Psoas muscle (tissue), 8 donors: ENCODE measurements at regions of chr6 and their contacts with region 1.

Region 1: DNA sequence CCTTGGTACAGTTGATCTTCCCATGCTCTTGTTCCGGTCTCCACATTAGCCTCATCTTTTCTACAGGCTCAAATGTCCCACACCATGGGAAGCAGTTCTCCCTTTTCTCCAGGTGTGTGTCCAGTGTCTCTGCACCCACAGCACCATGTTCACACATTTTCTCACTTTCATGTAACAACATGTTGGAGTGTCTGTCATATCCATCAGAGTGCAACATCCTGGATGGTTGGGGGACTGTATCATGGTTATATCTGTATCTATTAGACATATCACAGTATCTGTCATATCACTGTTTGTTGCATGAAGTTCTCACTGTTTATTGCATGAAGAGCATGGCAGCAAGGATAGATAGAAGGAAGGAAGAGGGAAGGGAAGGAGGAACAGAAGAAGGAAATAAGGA is 635.6 kb downstream of the EPM2A start:
- DNase-seq: no peak
- ATAC-seq: no peak
- H3K4me3 ChIP-seq: no peak overlapping the region
- H3K27ac ChIP-seq: no peak overlapping the region
- H3K4me1 ChIP-seq: no peaks in the 10 kb centered on the region
- H3K27me3 ChIP-seq: no peaks in the 10 kb centered on the region
- CTCF ChIP-seq: no peak

Region 2: GRCh38 chr6:144493035-144493910 is 606.4 kb before region 1 on chr6:
- intact Hi-C with region 1: no loop called
- DNase-seq: no peak
- ATAC-seq: peak in 1 of 4 donors; percentile 90
- H3K4me3 ChIP-seq: no peak overlapping the region
- H3K27ac ChIP-seq: no peak overlapping the region
- H3K4me1 ChIP-seq: no peaks in the 10 kb centered on the region
- H3K27me3 ChIP-seq: no peaks in the 10 kb centered on the region
- CTCF ChIP-seq: no peak

Region 3: GRCh38 chr6:144999127-144999526 is 100.6 kb before region 1 on chr6:
- intact Hi-C with region 1: no loop called
- DNase-seq: no peak
- ATAC-seq: no peak
- H3K4me3 ChIP-seq: no peak overlapping the region
- H3K27ac ChIP-seq: no peak overlapping the region
- H3K4me1 ChIP-seq: no peaks in the 10 kb centered on the region
- H3K27me3 ChIP-seq: no peaks in the 10 kb centered on the region
- CTCF ChIP-seq: no peak

Region 4: GRCh38 chr6:145036848-145037567 is 62.7 kb before region 1 on chr6:
- intact Hi-C with region 1: no loop called
- DNase-seq: no peak
- ATAC-seq: peak in 3 of 4 donors; percentile 51 to 75 (median 70)
- H3K4me3 ChIP-seq: no peak overlapping the region
- H3K27ac ChIP-seq: no peak overlapping the region
- H3K4me1 ChIP-seq: no peaks in the 10 kb centered on the region
- H3K27me3 ChIP-seq: no peaks in the 10 kb centered on the region
- CTCF ChIP-seq: no peak

Region 5: GRCh38 chr6:145086197-145086596 is 13.5 kb before region 1 on chr6:
- intact Hi-C with region 1: loop called in 1 of 2 experiments (anchors 1 kb)
- DNase-seq: no peak
- ATAC-seq: no peak
- H3K4me3 ChIP-seq: no peak overlapping the region
- H3K27ac ChIP-seq: no peak overlapping the region
- H3K4me1 ChIP-seq: no peaks in the 10 kb centered on the region
- H3K27me3 ChIP-seq: no peaks in the 10 kb centered on the region
- CTCF ChIP-seq: no peak

Region 6: DNA sequence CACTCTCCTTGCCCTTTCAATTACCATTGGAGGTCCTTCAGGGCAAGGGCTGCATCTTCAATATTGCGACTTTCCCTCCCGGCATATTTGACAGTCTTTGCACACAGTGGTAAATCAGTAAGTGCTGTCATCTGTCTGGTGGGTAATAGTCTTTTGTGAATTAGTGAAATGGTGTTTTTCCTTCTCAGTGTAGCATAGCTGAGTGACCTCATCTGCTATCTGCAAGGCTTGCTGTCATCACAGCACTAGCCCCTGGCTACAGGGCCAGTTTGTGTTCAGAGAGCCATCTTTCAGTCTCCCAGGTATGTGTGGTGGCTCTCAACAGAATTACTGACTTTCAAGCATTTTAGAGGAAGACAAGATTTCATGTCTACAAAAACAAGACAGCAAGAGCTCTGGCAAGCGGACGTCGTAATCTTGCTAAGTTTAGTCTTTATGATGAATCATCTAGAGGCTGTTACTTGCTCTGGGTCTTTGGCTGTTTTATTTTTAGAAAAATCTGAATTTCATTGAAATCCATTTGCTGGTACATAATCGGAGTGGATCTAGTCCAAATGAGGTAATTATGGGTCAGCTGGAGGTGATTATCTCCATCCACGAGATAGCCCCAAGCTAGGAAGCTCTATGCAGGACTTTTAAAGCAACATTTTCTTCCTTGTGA is 106.7 kb after region 1 on chr6:
- intact Hi-C with region 1: no loop called
- DNase-seq: no peak
- ATAC-seq: no peak
- H3K4me3 ChIP-seq: no peak overlapping the region
- H3K27ac ChIP-seq: no peak overlapping the region
- H3K4me1 ChIP-seq: no peaks in the 10 kb centered on the region
- H3K27me3 ChIP-seq: no peaks in the 10 kb centered on the region
- CTCF ChIP-seq: no peak